ENCODE measurements at regions of chr7 and their contacts with region 1.

Region 1: GRCh38 chr7:134514663-134515062 is 12.7 kb upstream of the AKR1B10 start:
- DNase-seq: peak; percentile 75
- H3K4me3 ChIP-seq: no peak overlapping the region
- H3K27ac ChIP-seq: no peak overlapping the region
- H3K4me1 ChIP-seq: peaks cover 52% of the 10 kb centered on the region
- H3K27me3 ChIP-seq: no peaks in the 10 kb centered on the region
- CTCF ChIP-seq: peak; percentile 73 to 78

Region 2: DNA sequence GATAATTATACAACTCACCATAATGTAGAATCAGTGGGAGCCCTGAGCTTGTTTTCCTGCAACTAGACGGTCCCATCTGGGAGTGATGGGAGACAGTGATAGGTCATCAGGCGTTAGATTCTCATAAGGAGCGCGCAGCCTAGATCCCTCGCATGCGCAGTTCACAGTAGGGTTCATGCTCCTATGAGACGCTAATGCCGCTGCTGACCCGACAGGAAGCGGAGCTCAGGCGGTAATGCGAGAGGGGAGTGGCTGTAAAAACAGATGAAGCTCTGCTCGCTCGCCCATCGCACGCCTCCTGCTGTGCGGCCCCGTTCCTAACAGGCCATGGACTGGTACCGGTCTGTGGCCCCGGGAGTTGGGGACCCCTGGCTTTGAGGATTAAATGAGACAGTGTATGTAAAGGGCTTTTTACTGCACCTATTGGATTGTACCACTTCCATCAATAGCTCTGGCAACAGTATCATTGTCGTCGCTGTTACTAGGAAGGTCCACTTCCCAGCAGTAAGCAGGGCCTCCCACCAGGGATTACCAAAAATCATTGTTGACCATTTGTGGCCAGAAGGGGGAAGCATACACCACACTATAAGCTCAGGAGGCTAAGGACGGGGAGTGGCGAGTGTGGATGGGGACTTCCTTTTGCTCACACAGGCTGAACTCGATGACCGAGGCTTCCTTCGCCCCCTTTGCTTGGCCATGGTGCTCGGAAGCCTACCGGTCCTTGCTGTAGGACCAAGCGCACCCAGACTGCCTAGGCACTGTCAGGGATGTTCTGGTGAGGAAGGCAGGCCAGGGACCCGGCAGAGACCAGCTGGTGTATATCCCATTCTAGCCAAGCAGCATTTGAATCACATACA is 82.1 kb before region 1 on chr7:
- CTCF ChIA-PET with region 1: interaction called, 5 read pairs
- dilution Hi-C with region 1: loop called (anchors 10 kb)
- in situ Hi-C with region 1: loop called (anchors 5 kb)
- intact Hi-C with region 1: loop called (anchors 1 kb)
- DNase-seq: peak; percentile 91
- H3K4me3 ChIP-seq: peak overlapping the region; percentile 35 to 45 (median 45)
- H3K27ac ChIP-seq: peak overlapping the region; percentile 68
- H3K4me1 ChIP-seq: peaks cover 22% of the 10 kb centered on the region
- H3K27me3 ChIP-seq: no peaks in the 10 kb centered on the region
- CTCF ChIP-seq: peak; percentile 54 to 62

Region 3: DNA sequence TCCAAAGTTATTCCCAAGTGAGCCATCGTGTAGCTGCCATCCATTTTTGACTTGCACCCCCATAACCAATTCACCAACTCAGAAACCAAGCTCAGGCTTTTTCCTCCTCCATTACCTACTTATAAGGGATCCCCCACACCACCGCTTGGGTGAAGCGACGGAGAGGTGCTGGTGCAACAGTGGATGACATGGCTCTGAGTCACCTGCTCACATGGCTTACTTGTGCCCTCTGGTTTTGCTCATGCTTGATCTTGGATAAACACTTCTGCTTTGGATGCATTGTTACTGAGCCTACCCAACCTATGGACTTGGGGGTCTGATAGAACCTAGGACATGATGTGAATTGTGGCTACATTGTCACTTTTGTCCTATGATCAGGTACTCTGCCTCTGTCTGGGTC is 43.8 kb before region 1 on chr7:
- CTCF ChIA-PET with region 1: no interaction called
- dilution Hi-C with region 1: no loop called
- in situ Hi-C with region 1: no loop called
- intact Hi-C with region 1: loop called (anchors 2 kb)
- DNase-seq: peak; percentile 90
- H3K4me3 ChIP-seq: no peak overlapping the region
- H3K27ac ChIP-seq: peak overlapping the region; percentile 41
- H3K4me1 ChIP-seq: peaks cover 10% of the 10 kb centered on the region
- H3K27me3 ChIP-seq: no peaks in the 10 kb centered on the region
- CTCF ChIP-seq: peak in 1 of 2 donors; percentile 15

Region 4: GRCh38 chr7:134547397-134548054 is 32.9 kb after region 1 on chr7:
- CTCF ChIA-PET with region 1: interaction called, 3 read pairs
- dilution Hi-C with region 1: no loop called
- in situ Hi-C with region 1: no loop called
- intact Hi-C with region 1: loop called (anchors 1 kb)
- DNase-seq: peak; percentile 72
- H3K4me3 ChIP-seq: peak overlapping the region; percentile 36 to 45 (median 42)
- H3K27ac ChIP-seq: peak overlapping the region; percentile 70
- H3K4me1 ChIP-seq: peaks cover 22% of the 10 kb centered on the region
- H3K27me3 ChIP-seq: no peaks in the 10 kb centered on the region
- CTCF ChIP-seq: peak; percentile 82 to 86

Region 5: GRCh38 chr7:134622303-134622995 is 107.8 kb after region 1 on chr7:
- CTCF ChIA-PET with region 1: no interaction called
- dilution Hi-C with region 1: no loop called
- in situ Hi-C with region 1: no loop called
- intact Hi-C with region 1: no loop called
- DNase-seq: no peak
- H3K4me3 ChIP-seq: no peak overlapping the region
- H3K27ac ChIP-seq: peak overlapping the region; percentile 69
- H3K4me1 ChIP-seq: peaks cover 42% of the 10 kb centered on the region
- H3K27me3 ChIP-seq: no peaks in the 10 kb centered on the region
- CTCF ChIP-seq: no peak

Measured in mammary epithelial cell (primary cell).